HEK293 (cell line): ENCODE measurements at regions of chr16 and their contacts with region 1.

Region 1: DNA sequence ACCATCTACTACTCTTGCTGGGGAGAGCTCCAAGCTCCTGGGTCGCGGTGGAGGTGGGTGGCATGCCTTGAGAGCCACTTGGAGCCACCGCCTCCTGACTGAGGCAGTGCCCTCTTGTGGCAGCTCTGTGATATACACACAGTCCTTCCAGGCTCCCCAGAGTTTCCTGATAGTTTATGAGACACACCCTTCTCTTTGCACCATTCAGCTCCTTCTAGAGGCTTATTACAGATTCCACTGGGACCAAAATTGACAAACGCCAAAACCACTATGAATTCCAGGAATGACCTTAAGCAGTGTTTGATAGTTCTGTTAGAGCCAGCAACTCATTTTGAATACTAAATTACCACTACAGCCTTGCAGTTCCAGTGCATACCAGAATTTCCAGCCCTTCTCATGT is 170.1 kb upstream of the CDH13 start:
- H3K4me3 ChIP-seq: no peak overlapping the region
- H3K27ac ChIP-seq: no peak overlapping the region
- H3K4me1 ChIP-seq: no peaks in the 10 kb centered on the region; the same call in 1 of the 2 replicates
- CTCF ChIP-seq: peak; percentile 44

Region 2: DNA sequence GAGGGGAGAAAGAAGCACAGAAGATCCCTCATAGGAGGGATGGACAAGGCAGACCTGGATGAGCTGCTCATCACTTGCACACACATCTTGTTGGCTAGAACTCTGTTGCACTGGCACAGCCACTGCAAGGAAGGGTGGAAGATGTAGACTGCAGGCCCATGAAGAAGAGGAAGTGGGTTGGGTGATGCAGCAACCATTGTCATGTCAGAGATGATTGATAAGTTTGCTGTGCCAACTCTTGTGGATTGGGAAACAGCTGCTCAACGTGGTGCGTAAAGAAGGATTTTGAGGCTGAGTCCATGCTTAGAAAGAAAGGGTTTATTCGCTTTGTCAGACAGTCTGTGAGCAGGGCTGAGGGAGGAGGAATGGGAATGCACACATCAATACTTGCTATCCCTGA is 125.3 kb before region 1 on chr16:
- CTCF ChIA-PET with region 1: no interaction called
- POLR2A ChIA-PET with region 1: no interaction called
- H3K4me3 ChIP-seq: no peak overlapping the region
- H3K27ac ChIP-seq: no peak overlapping the region
- H3K4me1 ChIP-seq: peaks cover 6% of the 10 kb centered on the region
- CTCF ChIP-seq: no peak

Region 3: DNA sequence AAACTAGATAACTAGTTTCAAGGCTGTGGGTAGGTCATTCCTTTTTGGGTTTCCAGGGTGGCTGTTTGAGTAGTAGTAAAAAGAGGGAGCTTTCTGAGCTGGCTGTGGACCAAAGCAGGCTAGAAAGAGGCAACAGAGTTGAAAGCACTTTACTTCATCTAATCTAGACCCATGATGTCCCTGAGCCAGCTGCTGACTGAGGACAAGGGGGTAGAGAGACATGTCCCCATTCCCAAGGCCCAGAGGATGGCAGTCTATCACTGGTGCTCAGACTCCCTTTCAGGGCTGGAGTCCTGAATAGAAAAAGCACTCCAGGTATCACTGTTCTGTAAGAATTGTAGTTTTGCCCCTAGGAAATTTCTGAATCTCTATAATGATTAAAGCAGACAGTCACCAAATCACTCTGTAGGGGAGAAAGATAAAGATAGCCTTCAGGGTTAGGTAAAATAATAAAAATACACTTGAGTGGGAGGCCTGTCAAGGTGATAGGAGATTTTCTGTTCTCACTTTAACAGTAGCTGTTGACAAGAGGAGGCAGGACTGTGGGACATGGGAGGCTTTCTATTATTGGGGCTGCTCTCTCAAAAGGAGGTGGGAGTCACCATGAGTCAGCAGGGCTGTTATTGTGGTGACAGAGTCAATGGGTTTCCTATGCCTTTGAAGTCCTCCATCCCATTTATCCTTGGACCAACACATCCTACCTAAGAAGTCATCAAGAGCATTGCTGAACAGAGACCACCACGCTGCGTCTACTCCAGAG is 96.5 kb before region 1 on chr16:
- CTCF ChIA-PET with region 1: interaction called, 11 read pairs
- POLR2A ChIA-PET with region 1: no interaction called
- H3K4me3 ChIP-seq: no peak overlapping the region
- H3K27ac ChIP-seq: no peak overlapping the region
- H3K4me1 ChIP-seq: no peaks in the 10 kb centered on the region
- CTCF ChIP-seq: no peak

Region 4: GRCh38 chr16:82439671-82440293 is 16.9 kb before region 1 on chr16:
- CTCF ChIA-PET with region 1: interaction called, 26 read pairs
- POLR2A ChIA-PET with region 1: no interaction called
- H3K4me3 ChIP-seq: no peak overlapping the region
- H3K27ac ChIP-seq: no peak overlapping the region
- H3K4me1 ChIP-seq: no peaks in the 10 kb centered on the region
- CTCF ChIP-seq: no peak

Region 5: DNA sequence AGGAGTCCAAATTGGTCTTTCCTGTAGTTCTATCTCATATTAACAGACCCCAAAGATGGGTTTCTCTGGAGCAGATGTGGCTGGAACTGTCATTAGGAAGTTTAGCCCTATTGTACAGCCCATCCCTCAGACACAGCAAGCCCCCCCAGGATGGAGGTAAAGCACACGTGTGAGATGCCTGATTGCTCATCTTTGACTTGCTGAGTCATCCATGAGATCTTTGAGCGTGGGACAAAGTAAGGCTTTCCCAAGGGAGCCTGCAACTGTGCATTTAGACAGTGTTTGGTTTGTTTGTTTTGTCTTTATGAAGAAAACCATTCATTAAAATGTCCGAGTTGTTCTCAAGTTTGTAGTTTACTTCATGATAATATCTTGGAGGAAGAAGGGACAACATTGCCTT is 24.8 kb after region 1 on chr16:
- CTCF ChIA-PET with region 1: interaction called, 13 read pairs
- POLR2A ChIA-PET with region 1: no interaction called
- H3K4me3 ChIP-seq: no peak overlapping the region
- H3K27ac ChIP-seq: no peak overlapping the region
- H3K4me1 ChIP-seq: no peaks in the 10 kb centered on the region
- CTCF ChIP-seq: no peak

Region 6: GRCh38 chr16:82814059-82814458 is 357.4 kb after region 1 on chr16:
- CTCF ChIA-PET with region 1: no interaction called
- POLR2A ChIA-PET with region 1: no interaction called
- H3K4me3 ChIP-seq: no peak overlapping the region
- H3K27ac ChIP-seq: no peak overlapping the region
- H3K4me1 ChIP-seq: no peaks in the 10 kb centered on the region
- CTCF ChIP-seq: no peak